Gastrocnemius medialis (tissue), 4 donors: ENCODE measurements at regions of chr18 and their contacts with region 1.

Region 1: DNA sequence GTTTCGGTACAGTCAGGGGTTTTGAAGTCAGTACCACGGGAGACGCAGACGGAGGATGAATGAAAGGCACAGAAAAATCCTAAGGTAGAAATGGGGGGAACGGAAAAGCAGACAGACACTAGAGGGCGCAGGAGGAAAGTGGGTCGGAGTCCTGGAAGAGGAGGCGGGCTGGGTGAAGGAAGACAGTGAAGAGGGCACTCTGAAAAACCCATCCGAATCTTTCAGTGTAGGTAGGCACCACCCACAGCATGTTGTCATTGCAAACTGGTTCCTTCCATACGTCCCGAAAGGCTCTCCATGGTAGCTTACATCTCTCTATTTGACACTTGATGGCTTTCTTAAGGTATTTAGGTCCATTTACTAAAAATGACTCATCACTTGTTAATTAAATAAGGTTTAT is 18.5 kb upstream of the ZNF236 start:
- DNase-seq: peak; percentile 29 to 30
- ATAC-seq: peak; percentile 64 to 70
- H3K4me3 ChIP-seq: peak overlapping the region in 1 of 4 donors; percentile 11
- H3K27ac ChIP-seq: no peak overlapping the region
- H3K4me1 ChIP-seq: peaks cover 9 to 10% of the 10 kb centered on the region in 2 donors
- H3K27me3 ChIP-seq: peaks cover 0 to 5% (median 2%) of the 10 kb centered on the region in 3 donors
- CTCF ChIP-seq: peak; percentile 54 to 79 (median 61)
- POLR2A ChIP-seq: no peak

Region 2: GRCh38 chr18:76822510-76823160 is 18.8 kb after region 1 on chr18 and contains the start of gene ZNF236:
- in situ Hi-C with region 1: no loop called
- intact Hi-C with region 1: loop called (anchors 2 kb)
- DNase-seq: peak; percentile 47 to 60
- ATAC-seq: peak; percentile 73 to 78
- H3K4me3 ChIP-seq: peak within 1 kb of the TSS; percentile 77 to 97 (median 86)
- H3K27ac ChIP-seq: peak within 1 kb of the TSS; percentile 89 to 100 (median 94)
- H3K4me1 ChIP-seq: peaks cover 14 to 20% of the 10 kb centered on the region in 2 donors
- H3K27me3 ChIP-seq: no peaks in the 10 kb centered on the region
- CTCF ChIP-seq: no peak
- POLR2A ChIP-seq: peak; percentile 74 to 76
- total RNA-seq, gene ZNF236: 6.2 to 7.1 (median 6.5) TPM

Region 3: DNA sequence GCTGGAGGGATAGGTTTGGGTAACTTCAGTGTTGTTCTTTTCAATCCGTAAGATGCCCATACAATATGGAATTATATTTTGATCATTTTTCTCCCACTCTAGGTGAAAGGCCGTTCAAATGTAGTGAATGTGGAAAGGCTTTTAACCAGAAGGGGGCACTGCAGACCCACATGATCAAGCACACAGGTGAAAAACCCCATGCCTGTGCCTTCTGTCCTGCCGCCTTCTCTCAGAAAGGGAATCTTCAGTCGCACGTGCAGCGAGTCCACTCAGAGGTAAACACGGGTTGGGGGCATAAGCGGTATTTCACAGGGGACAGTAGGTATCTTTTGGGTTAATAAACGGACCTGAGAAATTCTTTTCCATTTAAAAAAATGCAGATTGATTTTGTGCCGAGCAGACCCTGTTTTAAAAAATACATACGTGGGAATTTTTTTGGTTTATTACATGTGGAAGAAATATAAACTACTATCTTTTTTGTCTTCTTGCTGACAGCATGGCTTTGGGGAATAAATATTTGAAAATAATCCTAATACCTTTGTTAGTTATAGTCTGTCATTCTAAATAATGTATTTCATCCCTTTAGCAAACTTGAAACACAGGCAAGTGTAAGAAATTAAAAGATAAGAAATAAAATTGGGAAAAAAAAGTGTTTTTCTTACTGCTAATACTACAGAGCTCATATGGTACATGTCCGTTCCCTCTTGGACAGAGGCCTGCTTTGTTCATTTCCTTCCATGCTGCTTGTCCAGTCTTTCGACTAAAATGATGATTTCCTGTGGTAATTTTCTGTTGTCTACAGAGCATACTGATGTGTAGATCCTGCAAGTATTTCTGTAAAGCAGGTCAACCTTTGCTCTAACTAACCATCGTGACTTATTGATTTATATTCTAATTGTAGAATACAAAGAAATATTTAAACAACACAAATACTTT is 71.8 kb after region 1 on chr18:
- in situ Hi-C with region 1: no loop called
- intact Hi-C with region 1: loop called (anchors 5 kb)
- DNase-seq: no peak
- ATAC-seq: no peak
- H3K4me3 ChIP-seq: no peak overlapping the region
- H3K27ac ChIP-seq: no peak overlapping the region
- H3K4me1 ChIP-seq: no peaks in the 10 kb centered on the region
- H3K27me3 ChIP-seq: no peaks in the 10 kb centered on the region
- CTCF ChIP-seq: peak in 3 of 5 experiments; percentile 33 to 58 (median 46)
- POLR2A ChIP-seq: no peak

Region 4: GRCh38 chr18:76982841-76983587 is 179.2 kb after region 1 on chr18:
- in situ Hi-C with region 1: loop called in 2 of 4 experiments (anchors 5 to 25 kb)
- intact Hi-C with region 1: loop called (anchors 2 kb)
- DNase-seq: peak; percentile 37 to 73
- ATAC-seq: peak; percentile 66 to 73
- H3K4me3 ChIP-seq: no peak overlapping the region
- H3K27ac ChIP-seq: no peak overlapping the region
- H3K4me1 ChIP-seq: peaks cover under 1 to 2% of the 10 kb centered on the region in 2 donors
- H3K27me3 ChIP-seq: no peaks in the 10 kb centered on the region
- CTCF ChIP-seq: peak; percentile 73 to 90 (median 86)
- POLR2A ChIP-seq: no peak